Activated CD4-positive, alpha-beta T cell treated with anti-CD3 and anti-CD28 coated beads, Interleukin-2, amount 10 ng/mL, durations not matched to agents 24 days and 14 days (primary cell): ENCODE measurements at regions of chr12 and their contacts with region 1.

Region 1: GRCh38 chr12:68565375-68565903 is 45.3 kb upstream of the RAP1B start:
- DNase-seq: peak; percentile 66
- H3K4me3 Mint-ChIP-seq: peak overlapping the region; percentile 22
- H3K27ac Mint-ChIP-seq: peak overlapping the region; percentile 18
- H3K4me1 Mint-ChIP-seq: peaks cover 21% of the 10 kb centered on the region
- H3K27me3 Mint-ChIP-seq: no peaks in the 10 kb centered on the region

Region 2: DNA sequence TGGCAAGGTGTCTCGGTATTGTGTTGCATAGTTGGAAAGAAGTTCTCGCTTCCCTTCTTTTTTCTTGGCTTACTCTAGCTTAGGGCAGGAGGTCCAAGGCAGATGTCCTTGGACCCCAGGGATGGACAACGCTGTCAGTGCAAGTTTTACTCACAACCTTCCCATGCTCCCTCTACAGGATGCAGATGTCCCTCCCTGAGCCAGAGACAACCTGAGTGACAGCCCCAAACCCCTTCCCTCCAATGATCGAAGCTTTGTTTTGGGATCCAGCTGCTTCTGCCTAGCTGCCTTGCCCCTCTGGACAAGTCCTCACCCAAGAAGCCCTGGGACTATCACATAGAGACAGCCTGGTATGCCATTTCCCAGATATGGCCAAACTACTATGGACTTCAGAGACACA is 66.7 kb before region 1 on chr12:
- intact Hi-C with region 1: no loop called
- DNase-seq: no peak
- H3K4me3 Mint-ChIP-seq: no peak overlapping the region
- H3K27ac Mint-ChIP-seq: peak overlapping the region; percentile 39
- H3K4me1 Mint-ChIP-seq: peaks cover 34% of the 10 kb centered on the region
- H3K27me3 Mint-ChIP-seq: no peaks in the 10 kb centered on the region

Region 3: GRCh38 chr12:68587448-68587873 is 22.0 kb after region 1 on chr12:
- intact Hi-C with region 1: loop called (anchors 1 kb)
- DNase-seq: peak; percentile 84
- H3K4me3 Mint-ChIP-seq: peak overlapping the region; percentile 16
- H3K27ac Mint-ChIP-seq: peak overlapping the region; percentile 74
- H3K4me1 Mint-ChIP-seq: peaks cover 36% of the 10 kb centered on the region
- H3K27me3 Mint-ChIP-seq: no peaks in the 10 kb centered on the region

Region 4: DNA sequence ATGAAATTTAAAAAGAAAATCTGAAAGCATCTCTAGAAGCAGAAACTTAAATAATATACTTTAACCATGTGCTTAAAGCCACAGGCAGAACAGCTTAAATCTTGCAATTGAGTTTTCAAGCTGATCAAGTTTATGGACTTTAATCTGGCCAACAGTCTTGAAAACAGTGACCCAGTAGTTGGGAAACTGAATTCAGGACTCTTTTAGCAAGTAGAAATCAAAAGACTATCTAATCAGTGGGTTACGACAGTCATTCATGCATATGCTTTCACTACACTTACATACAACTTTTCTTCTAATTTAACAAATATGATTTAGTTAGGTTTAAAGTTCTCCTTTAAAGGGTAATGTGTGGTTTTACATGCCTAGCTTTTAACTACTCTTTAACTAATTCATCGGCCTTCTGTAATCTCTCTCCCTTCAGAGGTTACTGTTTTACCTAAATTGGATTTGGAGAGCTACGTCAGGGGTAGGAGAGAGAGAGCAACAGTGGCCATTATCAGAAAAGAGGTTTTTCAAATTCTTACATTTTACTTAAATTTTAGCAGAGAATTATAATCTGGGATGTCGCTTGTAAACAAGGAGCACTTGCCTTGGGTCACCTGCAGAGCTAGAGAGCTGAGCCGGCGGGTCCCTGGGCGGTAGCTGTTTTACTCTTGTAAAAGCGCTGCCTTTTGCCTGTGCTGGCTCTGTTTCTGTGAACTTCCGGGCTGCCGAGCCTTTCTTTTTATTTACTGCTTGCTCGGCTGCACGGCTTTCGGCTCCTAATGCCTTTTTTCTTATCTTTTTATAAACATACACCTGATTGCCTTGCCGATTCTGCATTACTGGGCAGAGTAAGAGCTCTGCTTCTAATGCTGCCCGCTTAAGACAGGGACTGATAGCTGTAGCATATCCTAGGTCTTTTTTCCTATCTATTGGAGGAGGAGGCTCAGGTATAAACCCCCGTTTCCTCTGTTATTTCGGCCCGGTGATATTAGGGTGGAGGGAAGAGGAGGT is 765.3 kb after region 1 on chr12:
- intact Hi-C with region 1: no loop called
- DNase-seq: peak; percentile 82
- H3K4me3 Mint-ChIP-seq: peak overlapping the region; percentile 73
- H3K27ac Mint-ChIP-seq: peak overlapping the region; percentile 88
- H3K4me1 Mint-ChIP-seq: peaks cover 20% of the 10 kb centered on the region
- H3K27me3 Mint-ChIP-seq: peaks cover 17% of the 10 kb centered on the region